ENCODE measurements at regions of chr4 and their contacts with region 1.

Region 1: DNA sequence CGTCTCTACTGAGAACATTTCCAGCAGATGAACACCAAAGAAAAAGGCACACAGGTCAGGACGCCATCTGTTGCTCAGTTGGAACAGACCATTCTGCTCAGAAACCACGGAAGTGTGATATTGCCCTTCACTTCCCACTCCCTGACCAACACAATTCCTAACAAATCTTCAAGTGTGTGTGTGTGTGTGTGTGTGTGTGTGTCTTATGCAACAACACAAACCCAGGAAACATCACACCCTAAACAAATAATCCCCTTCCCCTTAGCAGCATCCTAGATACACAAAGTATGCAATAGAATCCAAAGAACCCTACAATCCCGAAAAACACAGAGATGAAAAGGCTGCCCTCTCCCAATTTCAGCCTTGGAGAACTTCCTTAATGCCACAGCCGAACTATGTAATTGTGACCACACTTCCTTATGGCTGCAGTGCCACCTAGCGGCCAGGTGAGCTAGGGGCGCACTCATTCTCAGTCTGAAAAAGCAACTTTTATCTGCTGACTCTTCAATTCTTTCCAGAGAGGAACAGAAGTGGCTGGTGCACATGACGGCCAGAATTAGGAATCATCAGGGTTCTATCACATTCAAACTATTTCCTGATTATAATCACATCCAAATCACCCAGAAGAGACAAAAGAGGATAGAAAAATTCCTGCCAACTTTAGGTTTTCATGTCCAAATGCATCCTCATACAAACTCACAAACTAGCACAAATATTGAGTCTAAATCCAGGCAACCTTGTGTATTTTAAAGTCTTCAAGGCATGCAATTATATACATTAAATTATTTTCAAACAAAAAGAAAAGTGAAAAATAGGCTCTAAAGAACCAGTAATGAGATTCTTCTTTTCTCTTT is 164.9 kb downstream of the DHX15 start:
- DNase-seq: peak; percentile 69 to 79
- ATAC-seq: peak; percentile 77 to 94 (median 86)
- H3K4me3 ChIP-seq: no peak overlapping the region
- H3K27ac ChIP-seq: no peak overlapping the region
- H3K4me1 ChIP-seq: peaks cover 0 to 5% (median 0%) of the 10 kb centered on the region in 9 donors
- H3K27me3 ChIP-seq: no peaks in the 10 kb centered on the region
- CTCF ChIP-seq: peak; percentile 77 to 93 (median 91)

Region 2: DNA sequence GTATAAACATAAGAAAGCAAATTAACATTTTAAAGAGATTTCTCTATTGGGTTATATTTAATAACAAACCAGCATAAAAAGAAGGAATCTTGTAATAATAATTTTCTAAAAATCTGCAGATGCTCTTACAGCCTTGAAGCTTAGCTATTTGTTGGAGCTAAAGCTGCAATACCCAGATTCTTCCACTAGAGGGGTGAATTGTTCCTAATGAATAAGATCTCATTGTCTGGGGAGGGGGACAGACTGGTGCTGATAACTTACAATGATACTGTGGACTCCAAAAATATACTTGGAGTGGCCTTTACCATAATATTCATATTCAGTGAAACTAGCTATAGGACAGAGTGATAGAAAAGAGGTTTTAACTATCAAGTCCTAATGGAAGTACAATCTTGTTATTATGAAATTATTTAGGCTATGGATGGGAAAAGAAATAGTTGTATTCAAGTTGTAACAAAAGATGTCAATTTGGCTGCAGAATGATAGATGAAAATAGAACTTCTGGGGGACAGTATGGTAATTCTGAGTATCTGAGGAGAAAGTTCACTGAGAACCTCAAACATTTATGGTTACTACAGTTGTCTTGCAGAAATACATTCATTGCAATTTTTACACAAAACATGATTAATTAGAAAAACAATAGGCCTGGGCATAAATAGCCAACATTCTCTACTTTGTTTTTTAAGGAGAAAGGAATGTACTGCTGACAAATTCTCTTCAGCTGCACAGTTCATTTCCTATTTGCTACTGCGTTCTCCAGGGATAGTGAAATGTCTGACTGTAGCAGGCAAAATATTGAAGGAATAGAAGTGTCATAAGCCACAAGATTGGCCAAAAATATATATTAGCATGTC is 1283.4 kb before region 1 on chr4:
- intact Hi-C with region 1: loop called in 1 of 10 experiments (anchors 10 kb)
- DNase-seq: peak in 1 of 2 donors; percentile 6
- ATAC-seq: no peak
- H3K4me3 ChIP-seq: no peak overlapping the region
- H3K27ac ChIP-seq: no peak overlapping the region
- H3K4me1 ChIP-seq: peaks cover 0 to 6% (median 0%) of the 10 kb centered on the region in 9 donors
- H3K27me3 ChIP-seq: no peaks in the 10 kb centered on the region
- CTCF ChIP-seq: peak; percentile 40 to 84 (median 74)

Region 3: DNA sequence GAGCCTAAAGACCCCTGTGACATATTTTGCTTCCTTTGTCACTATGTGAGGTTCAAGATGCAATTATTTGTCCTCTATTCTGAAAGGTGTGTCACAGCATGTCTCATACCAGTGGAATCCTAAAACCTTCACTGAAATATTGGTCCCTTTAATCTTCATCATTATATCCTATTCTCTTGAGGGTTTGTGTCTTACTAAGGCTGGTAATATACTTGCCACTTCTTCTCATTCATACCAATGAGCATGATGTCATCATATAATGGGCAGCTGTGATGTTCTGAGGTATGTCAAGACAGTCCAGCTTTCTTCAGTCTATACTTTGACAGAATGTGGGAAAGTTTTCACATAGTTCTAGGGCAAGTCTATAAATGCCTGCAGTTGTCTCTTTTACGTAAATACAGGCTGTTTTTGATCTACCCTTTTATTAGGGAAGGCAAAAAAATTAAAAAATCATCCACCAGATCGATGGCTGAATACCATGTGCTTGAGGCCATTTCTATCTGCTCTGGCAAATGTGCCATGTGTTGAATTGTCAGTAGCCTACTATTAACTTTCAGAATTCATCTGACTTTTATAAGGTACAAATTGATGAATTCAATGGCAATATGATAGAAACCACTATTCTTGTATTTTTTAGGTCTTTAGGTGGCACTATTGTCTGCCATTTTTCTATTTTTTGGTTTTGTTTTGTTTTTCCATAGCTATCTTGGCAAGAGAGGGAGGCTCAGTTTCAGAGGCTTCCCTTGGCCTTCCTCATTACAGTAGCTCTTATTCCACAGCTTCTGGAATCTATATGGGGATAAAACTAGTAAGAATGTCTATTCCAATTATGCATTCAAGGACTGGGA is 738.5 kb before region 1 on chr4:
- intact Hi-C with region 1: loop called in 1 of 10 experiments (anchors 10 kb)
- DNase-seq: no peak
- ATAC-seq: no peak
- H3K4me3 ChIP-seq: no peak overlapping the region
- H3K27ac ChIP-seq: no peak overlapping the region
- H3K4me1 ChIP-seq: no peaks in the 10 kb centered on the region
- H3K27me3 ChIP-seq: no peaks in the 10 kb centered on the region
- CTCF ChIP-seq: peak in 4 of 9 donors; percentile 16 to 27 (median 20)

Region 4: GRCh38 chr4:23889814-23890341 is 529.5 kb before region 1 on chr4 and contains the start of gene PPARGC1A:
- intact Hi-C with region 1: loop called in 1 of 10 experiments (anchors 10 kb)
- DNase-seq: peak; percentile 41 to 69
- ATAC-seq: peak; percentile 86 to 96 (median 92)
- H3K4me3 ChIP-seq: peak within 1 kb of the TSS; percentile 31 to 63 (median 58)
- H3K27ac ChIP-seq: peak within 1 kb of the TSS; percentile 61 to 90 (median 82)
- H3K4me1 ChIP-seq: peaks cover 0 to 27% (median 7%) of the 10 kb centered on the region in 9 donors
- H3K27me3 ChIP-seq: no peaks in the 10 kb centered on the region
- CTCF ChIP-seq: no peak
- total RNA-seq, gene PPARGC1A: 66.3 to 200 (median 106) TPM

Region 5: DNA sequence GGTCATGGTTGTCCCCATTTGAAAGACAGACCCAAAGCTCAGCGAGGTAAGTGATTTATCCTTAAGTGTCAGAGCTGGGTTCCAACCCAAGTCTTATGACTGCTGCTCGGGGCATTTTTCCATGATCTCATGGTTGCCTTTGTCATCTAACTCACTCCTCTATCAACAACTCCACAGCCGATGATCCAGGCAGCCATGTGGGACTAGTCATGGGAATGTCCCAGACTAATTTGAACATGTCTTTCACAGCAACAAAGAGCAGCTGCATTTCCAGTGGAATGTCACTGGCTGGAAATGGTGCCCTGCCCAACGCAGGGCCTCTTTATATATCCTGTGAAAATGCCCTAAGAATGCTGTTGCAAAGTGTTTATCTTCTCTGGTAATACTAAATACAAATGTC is 244.8 kb before region 1 on chr4:
- intact Hi-C with region 1: loop called in 1 of 10 experiments (anchors 10 kb)
- DNase-seq: no peak
- ATAC-seq: no peak
- H3K4me3 ChIP-seq: no peak overlapping the region
- H3K27ac ChIP-seq: no peak overlapping the region
- H3K4me1 ChIP-seq: no peaks in the 10 kb centered on the region
- H3K27me3 ChIP-seq: no peaks in the 10 kb centered on the region
- CTCF ChIP-seq: no peak

Region 6: GRCh38 chr4:24249984-24250383 is 169.4 kb before region 1 on chr4:
- intact Hi-C with region 1: loop called in 5 of 10 experiments (anchors 5 to 10 kb)
- DNase-seq: no peak
- ATAC-seq: no peak
- H3K4me3 ChIP-seq: no peak overlapping the region
- H3K27ac ChIP-seq: peak overlapping the region in 8 of 10 donors; percentile 64 to 88 (median 76)
- H3K4me1 ChIP-seq: peaks cover 4 to 40% (median 23%) of the 10 kb centered on the region in 9 donors
- H3K27me3 ChIP-seq: no peaks in the 10 kb centered on the region
- CTCF ChIP-seq: no peak

Measured in heart right ventricle (tissue), 16 donors.